ENCODE measurements at regions of chr20 and their contacts with region 1.

Region 1: DNA sequence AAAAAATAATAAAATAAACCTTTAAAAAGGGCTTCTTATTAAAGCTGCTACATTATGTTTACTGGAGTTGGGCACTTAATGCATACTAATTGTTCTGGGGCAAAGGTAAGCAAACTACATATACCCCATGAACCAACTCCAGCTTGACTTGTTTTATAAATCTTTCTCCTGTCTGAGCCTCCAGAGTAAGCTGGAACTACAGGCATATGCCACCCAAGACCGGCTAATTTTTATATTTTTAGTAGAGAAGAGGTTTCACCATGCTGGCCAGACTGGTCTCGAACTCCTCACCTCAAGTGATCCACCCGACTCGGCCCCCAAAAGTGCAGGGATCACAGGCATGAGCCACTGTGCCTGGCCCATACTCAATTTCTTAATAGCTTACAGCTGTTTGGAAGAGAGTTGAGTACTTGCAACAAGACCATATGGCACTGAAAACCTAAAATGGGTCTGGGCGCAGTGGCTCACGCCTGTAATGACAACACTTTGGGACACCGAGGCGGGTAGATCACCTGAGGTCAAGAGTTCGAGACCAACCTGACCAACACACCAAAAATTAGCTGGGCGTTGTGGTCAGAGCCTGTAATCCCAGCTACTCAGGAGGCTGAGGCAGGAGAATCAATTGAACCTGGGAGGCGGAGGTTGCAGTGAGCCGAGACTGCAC is 19.9 kb downstream of the ROMO1 start:
- DNase-seq: no peak
- ATAC-seq: no peak
- H3K4me3 ChIP-seq: no peak overlapping the region
- H3K4me3 Mint-ChIP-seq: no peak overlapping the region
- H3K27ac ChIP-seq: no peak overlapping the region
- H3K27ac Mint-ChIP-seq: peak overlapping the region; percentile 27
- H3K4me1 ChIP-seq: peaks cover 53% of the 10 kb centered on the region
- H3K4me1 Mint-ChIP-seq: peaks cover 51% of the 10 kb centered on the region
- H3K27me3 ChIP-seq: no peaks in the 10 kb centered on the region
- H3K27me3 Mint-ChIP-seq: no peaks in the 10 kb centered on the region
- CTCF ChIP-seq: no peak

Region 2: GRCh38 chr20:35252037-35252461 is 467.1 kb before region 1 on chr20:
- CTCF ChIA-PET with region 1: no interaction called
- POLR2A ChIA-PET with region 1: no interaction called
- intact Hi-C with region 1: no loop called
- DNase-seq: peak in 4 of 14 experiments; percentile 34 to 78 (median 71)
- ATAC-seq: peak; percentile 84
- H3K4me3 ChIP-seq: no peak overlapping the region
- H3K4me3 Mint-ChIP-seq: no peak overlapping the region
- H3K27ac ChIP-seq: peak overlapping the region in 1 of 2 donors; percentile 70
- H3K27ac Mint-ChIP-seq: peak overlapping the region; percentile 81
- H3K4me1 ChIP-seq: peaks cover 36% of the 10 kb centered on the region
- H3K4me1 Mint-ChIP-seq: peaks cover 19% of the 10 kb centered on the region
- H3K27me3 ChIP-seq: no peaks in the 10 kb centered on the region
- H3K27me3 Mint-ChIP-seq: no peaks in the 10 kb centered on the region
- CTCF ChIP-seq: no peak

Region 3: DNA sequence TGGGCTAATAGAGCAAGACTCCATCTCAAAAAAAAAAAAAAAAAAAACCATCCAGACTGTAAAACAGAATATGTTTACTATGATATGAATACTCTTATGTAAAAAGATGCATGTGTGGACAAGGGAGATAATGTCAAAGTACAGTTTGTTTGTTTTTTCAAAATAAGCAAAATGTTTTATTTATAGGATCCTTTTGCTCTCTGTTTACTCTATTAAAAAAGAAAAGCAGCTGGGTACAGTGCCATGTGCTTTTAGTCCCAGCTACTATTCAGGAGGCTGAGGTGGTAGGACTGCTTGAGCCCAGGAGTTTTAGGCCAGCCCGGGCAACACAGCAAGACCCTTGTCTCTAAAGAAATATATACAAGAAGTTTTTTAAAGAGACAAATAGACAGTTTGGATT is 345.4 kb before region 1 on chr20:
- CTCF ChIA-PET with region 1: no interaction called
- POLR2A ChIA-PET with region 1: no interaction called
- intact Hi-C with region 1: no loop called
- DNase-seq: no peak
- ATAC-seq: no peak
- H3K4me3 ChIP-seq: no peak overlapping the region
- H3K4me3 Mint-ChIP-seq: no peak overlapping the region
- H3K27ac ChIP-seq: no peak overlapping the region
- H3K27ac Mint-ChIP-seq: no peak overlapping the region
- H3K4me1 ChIP-seq: no peaks in the 10 kb centered on the region
- H3K4me1 Mint-ChIP-seq: no peaks in the 10 kb centered on the region
- H3K27me3 ChIP-seq: no peaks in the 10 kb centered on the region
- H3K27me3 Mint-ChIP-seq: no peaks in the 10 kb centered on the region
- CTCF ChIP-seq: no peak

Region 4: GRCh38 chr20:35541783-35542588 is 177.1 kb before region 1 on chr20 and contains the start of gene ERGIC3:
- CTCF ChIA-PET with region 1: no interaction called
- POLR2A ChIA-PET with region 1: no interaction called
- intact Hi-C with region 1: no loop called
- DNase-seq: peak; percentile 95 to 99 (median 96)
- ATAC-seq: peak; percentile 99
- H3K4me3 ChIP-seq: peak within 1 kb of the TSS; percentile 75
- H3K4me3 Mint-ChIP-seq: peak within 1 kb of the TSS; percentile 97
- H3K27ac ChIP-seq: peak within 1 kb of the TSS; percentile 65 to 81
- H3K27ac Mint-ChIP-seq: peak within 1 kb of the TSS; percentile 89
- H3K4me1 ChIP-seq: peaks cover 18% of the 10 kb centered on the region
- H3K4me1 Mint-ChIP-seq: peaks cover 32% of the 10 kb centered on the region
- H3K27me3 ChIP-seq: no peaks in the 10 kb centered on the region
- H3K27me3 Mint-ChIP-seq: no peaks in the 10 kb centered on the region
- CTCF ChIP-seq: no peak
- total RNA-seq, gene ERGIC3: 144 to 146 TPM

Region 5: GRCh38 chr20:35601008-35601973 is 117.8 kb before region 1 on chr20:
- CTCF ChIA-PET with region 1: no interaction called
- POLR2A ChIA-PET with region 1: no interaction called
- intact Hi-C with region 1: loop called in 1 of 2 experiments (anchors 5 kb)
- DNase-seq: peak; percentile 65 to 92 (median 76)
- ATAC-seq: peak; percentile 95
- H3K4me3 ChIP-seq: peak overlapping the region; percentile 58
- H3K4me3 Mint-ChIP-seq: peak overlapping the region; percentile 77
- H3K27ac ChIP-seq: no peak overlapping the region
- H3K27ac Mint-ChIP-seq: no peak overlapping the region
- H3K4me1 ChIP-seq: peaks cover 19% of the 10 kb centered on the region
- H3K4me1 Mint-ChIP-seq: peaks cover 14% of the 10 kb centered on the region
- H3K27me3 ChIP-seq: peaks cover 9 to 15% of the 10 kb centered on the region in 2 experiments
- H3K27me3 Mint-ChIP-seq: peaks cover 22% of the 10 kb centered on the region
- CTCF ChIP-seq: peak; percentile 64

Region 6: DNA sequence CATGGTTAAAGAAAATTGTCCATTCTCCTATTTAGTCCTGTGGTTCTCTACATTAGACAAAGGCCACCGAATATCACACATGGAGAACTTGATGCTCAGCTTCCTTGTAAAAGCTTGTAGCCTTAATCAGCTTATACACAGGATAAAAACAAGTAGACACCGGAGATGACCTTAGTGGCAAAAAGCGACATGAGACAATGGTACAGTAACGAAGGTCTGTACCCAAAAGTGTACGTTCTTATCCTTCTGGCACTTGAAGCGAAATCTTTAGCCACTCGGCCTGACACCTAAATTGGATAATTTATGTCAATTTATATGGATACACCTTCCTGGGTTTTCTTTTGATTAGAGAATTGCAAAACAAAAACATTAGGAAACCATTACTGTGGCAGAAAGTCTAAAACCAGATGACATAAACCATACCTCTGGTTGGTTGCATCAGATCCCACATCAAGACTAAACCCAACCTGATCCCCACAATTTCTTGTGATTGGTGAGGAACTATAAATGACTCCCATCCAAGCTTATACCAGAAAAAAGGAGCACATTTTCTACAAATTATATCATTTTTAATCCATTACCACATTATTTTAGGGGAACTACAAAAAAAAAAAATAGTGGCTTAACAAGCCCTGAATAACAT is 16.8 kb after region 1 on chr20:
- CTCF ChIA-PET with region 1: interaction called, 6 read pairs
- POLR2A ChIA-PET with region 1: interaction called, 5 read pairs
- intact Hi-C with region 1: loop called (anchors 2 kb)
- DNase-seq: no peak
- ATAC-seq: no peak
- H3K4me3 ChIP-seq: no peak overlapping the region
- H3K4me3 Mint-ChIP-seq: peak overlapping the region; percentile 77
- H3K27ac ChIP-seq: no peak overlapping the region
- H3K27ac Mint-ChIP-seq: peak overlapping the region; percentile 75
- H3K4me1 ChIP-seq: peaks cover 56% of the 10 kb centered on the region
- H3K4me1 Mint-ChIP-seq: peaks cover 77% of the 10 kb centered on the region
- H3K27me3 ChIP-seq: no peaks in the 10 kb centered on the region
- H3K27me3 Mint-ChIP-seq: no peaks in the 10 kb centered on the region
- CTCF ChIP-seq: no peak

Region 7: DNA sequence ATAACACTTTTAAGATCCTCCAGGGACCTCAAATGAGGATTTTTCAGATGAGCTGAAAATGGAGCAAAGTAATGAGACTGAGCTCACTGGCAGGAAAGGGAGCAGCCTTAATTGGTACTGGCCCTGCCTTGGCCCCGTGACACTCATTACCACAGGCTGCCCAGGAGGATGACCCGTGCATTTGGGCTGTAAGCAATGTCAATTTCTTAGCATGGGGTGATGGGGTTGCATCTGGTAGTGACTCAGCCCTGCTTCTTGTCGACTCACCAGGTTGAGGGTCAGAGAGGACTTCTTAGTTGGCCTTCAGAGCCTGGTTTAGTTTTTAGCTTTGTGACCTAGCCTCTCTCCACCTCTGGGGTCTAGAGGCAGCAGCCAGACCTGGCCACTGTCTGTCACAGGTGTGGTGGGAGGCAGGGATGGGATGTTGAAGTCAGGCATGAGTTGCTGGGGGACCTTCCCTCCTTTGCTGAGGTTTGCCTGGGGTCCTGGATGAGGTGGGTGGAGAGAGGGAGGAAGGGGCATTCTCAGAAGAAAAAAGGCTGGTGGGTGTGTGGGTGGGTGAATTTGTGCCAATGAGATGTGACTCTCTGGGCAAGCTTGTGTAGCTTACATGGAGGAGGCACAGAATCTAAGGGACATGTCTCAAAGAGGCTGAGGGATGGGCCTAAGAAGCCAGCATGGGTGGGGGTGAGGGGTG is 409.5 kb after region 1 on chr20:
- CTCF ChIA-PET with region 1: no interaction called
- POLR2A ChIA-PET with region 1: no interaction called
- intact Hi-C with region 1: no loop called
- DNase-seq: no peak
- ATAC-seq: no peak
- H3K4me3 ChIP-seq: no peak overlapping the region
- H3K4me3 Mint-ChIP-seq: no peak overlapping the region
- H3K27ac ChIP-seq: no peak overlapping the region
- H3K27ac Mint-ChIP-seq: no peak overlapping the region
- H3K4me1 ChIP-seq: no peaks in the 10 kb centered on the region
- H3K4me1 Mint-ChIP-seq: no peaks in the 10 kb centered on the region
- H3K27me3 ChIP-seq: no peaks in the 10 kb centered on the region
- H3K27me3 Mint-ChIP-seq: peaks cover 9% of the 10 kb centered on the region
- CTCF ChIP-seq: no peak

Measured in CD4-positive, alpha-beta T cell (primary cell).